Activated CD4-positive, alpha-beta T cell treated with anti-CD3 and anti-CD28 coated beads for 36 hours (primary cell): ENCODE measurements at regions of chr14 and their contacts with region 1.

Region 1: GRCh38 chr14:96501742-96502617 is at the start of gene PAPOLA:
- DNase-seq: peak; percentile 96
- ATAC-seq: peak; percentile 95
- H3K4me3 Mint-ChIP-seq: peak within 1 kb of the TSS; percentile 99
- H3K27ac Mint-ChIP-seq: peak within 1 kb of the TSS; percentile 98
- H3K4me1 Mint-ChIP-seq: peaks cover 31% of the 10 kb centered on the region
- H3K27me3 Mint-ChIP-seq: peaks cover 6% of the 10 kb centered on the region
- total RNA-seq, gene PAPOLA: 190 to 205 TPM

Region 2: GRCh38 chr14:96484399-96484798 is 17.6 kb before region 1 on chr14:
- CTCF ChIA-PET with region 1: no interaction called
- POLR2A ChIA-PET with region 1: no interaction called
- intact Hi-C with region 1: no loop called
- DNase-seq: no peak
- ATAC-seq: no peak
- H3K4me3 Mint-ChIP-seq: no peak overlapping the region
- H3K27ac Mint-ChIP-seq: no peak overlapping the region
- H3K4me1 Mint-ChIP-seq: no peaks in the 10 kb centered on the region
- H3K27me3 Mint-ChIP-seq: peaks cover 14% of the 10 kb centered on the region

Region 3: DNA sequence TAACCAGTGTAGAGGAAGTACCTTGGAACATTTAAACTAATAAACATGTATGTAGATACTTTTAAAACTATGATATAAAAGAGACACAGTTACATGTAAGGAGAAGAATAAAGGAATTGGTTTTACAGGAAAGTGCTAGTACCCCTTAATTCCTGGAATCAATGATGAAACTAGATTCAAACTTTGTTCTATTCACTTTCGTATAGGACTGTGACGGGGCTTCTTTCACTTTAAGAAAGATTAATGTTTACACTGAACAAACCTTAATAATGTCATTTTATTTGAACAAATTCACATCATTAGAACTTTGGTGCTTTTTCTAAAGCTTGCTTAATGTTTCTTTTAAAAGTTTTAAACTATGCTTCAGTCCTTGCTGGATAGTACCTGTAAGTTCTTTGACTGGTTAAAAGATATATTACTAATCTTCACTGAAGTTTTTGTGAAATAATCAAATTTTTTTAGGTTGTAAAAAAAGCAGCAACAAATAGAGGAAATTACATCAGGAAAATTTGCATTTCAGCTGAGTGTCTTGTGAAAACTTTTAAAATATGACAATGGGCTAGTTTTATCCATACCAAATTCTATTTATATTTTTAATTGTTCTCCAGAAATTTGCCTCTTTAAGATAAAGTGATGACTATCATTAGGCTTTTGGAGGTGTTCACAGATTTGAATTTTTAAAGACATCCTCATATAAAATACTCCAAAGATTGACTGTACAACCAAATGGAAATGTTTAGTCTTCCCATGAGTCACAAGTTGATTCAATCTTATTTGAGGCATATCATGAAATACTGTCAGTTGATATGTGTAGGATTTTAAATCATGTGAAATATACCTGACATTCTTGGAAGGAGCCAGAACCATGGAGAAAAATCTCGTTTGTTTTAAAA is 36.4 kb after region 1 on chr14:
- CTCF ChIA-PET with region 1: no interaction called
- POLR2A ChIA-PET with region 1: no interaction called
- intact Hi-C with region 1: loop called (anchors 1 to 2 kb)
- DNase-seq: no peak
- ATAC-seq: peak; percentile 55
- H3K4me3 Mint-ChIP-seq: no peak overlapping the region
- H3K27ac Mint-ChIP-seq: peak overlapping the region; percentile 73
- H3K4me1 Mint-ChIP-seq: peaks cover 18% of the 10 kb centered on the region
- H3K27me3 Mint-ChIP-seq: no peaks in the 10 kb centered on the region

Region 4: DNA sequence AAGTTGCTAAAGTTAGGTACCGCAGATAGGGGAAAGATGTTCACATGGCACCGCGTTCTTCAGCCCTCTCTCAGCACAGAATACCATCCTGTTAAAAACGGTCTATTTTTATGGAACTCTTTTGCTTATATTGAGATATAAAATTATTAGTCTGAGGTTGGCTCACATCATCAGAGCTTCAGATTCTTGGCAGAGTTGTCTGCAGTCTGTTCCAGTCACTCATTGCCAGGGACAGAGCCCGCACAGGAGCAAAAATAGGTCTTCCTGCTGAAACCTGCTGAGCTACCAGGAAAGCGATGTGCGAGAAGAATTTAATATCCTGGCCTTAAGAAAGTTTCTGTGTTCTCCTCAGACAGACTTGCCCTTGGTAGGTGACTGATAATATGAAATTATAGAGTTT is 545.0 kb after region 1 on chr14:
- CTCF ChIA-PET with region 1: no interaction called
- POLR2A ChIA-PET with region 1: no interaction called
- intact Hi-C with region 1: no loop called
- DNase-seq: no peak
- ATAC-seq: no peak
- H3K4me3 Mint-ChIP-seq: no peak overlapping the region
- H3K27ac Mint-ChIP-seq: no peak overlapping the region
- H3K4me1 Mint-ChIP-seq: no peaks in the 10 kb centered on the region
- H3K27me3 Mint-ChIP-seq: no peaks in the 10 kb centered on the region